HEK293 (cell line): ENCODE measurements at regions of chr19 and their contacts with region 1.

Region 1: DNA sequence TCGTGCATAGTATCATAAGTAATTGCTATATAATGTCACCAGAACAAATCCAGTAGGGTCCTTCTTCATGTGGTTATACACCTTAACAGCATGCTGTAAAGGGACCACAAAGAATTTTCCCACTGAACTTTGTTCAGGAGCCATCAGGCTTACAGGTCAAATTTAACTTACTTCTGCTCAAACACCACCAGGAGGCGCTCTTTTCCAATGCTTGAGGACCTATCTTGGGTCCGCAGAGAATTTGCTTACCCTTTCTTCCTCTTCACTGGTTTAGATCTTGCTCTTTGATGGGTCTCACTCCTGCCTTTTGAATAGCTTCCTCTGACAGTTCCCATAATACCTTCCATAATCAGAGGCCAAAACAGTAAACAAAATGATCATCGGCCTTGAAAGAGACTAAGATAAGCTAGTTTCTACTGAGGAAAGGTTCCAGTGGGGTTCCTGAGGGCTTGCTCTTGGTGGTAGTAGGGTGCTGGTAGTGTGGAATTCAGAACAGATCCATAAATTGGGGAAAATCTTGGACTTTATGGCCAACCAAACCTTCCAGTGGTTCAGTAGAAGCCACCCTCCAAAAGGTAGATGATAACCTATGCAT is 37.4 kb downstream of the SCGB2B2 start:
- H3K4me3 ChIP-seq: no peak overlapping the region
- H3K27ac ChIP-seq: no peak overlapping the region
- H3K4me1 ChIP-seq: no peaks in the 10 kb centered on the region
- CTCF ChIP-seq: peak; percentile 92

Region 2: GRCh38 chr19:34416021-34416545 is 223.5 kb before region 1 on chr19:
- CTCF ChIA-PET with region 1: no interaction called
- POLR2A ChIA-PET with region 1: no interaction called
- H3K4me3 ChIP-seq: no peak overlapping the region
- H3K27ac ChIP-seq: no peak overlapping the region
- H3K4me1 ChIP-seq: no peaks in the 10 kb centered on the region
- CTCF ChIP-seq: no peak

Region 3: GRCh38 chr19:34600366-34600765 is 39.2 kb before region 1 on chr19:
- CTCF ChIA-PET with region 1: interaction called, 10 read pairs
- POLR2A ChIA-PET with region 1: no interaction called
- H3K4me3 ChIP-seq: no peak overlapping the region
- H3K27ac ChIP-seq: no peak overlapping the region
- H3K4me1 ChIP-seq: no peaks in the 10 kb centered on the region
- CTCF ChIP-seq: no peak

Region 4: GRCh38 chr19:34654796-34655195 is 15.2 kb after region 1 on chr19:
- CTCF ChIA-PET with region 1: interaction called, 108 read pairs
- POLR2A ChIA-PET with region 1: no interaction called
- H3K4me3 ChIP-seq: no peak overlapping the region
- H3K27ac ChIP-seq: no peak overlapping the region
- H3K4me1 ChIP-seq: peaks cover 7% of the 10 kb centered on the region; the same call in 1 of the 2 replicates
- CTCF ChIP-seq: no peak

Region 5: DNA sequence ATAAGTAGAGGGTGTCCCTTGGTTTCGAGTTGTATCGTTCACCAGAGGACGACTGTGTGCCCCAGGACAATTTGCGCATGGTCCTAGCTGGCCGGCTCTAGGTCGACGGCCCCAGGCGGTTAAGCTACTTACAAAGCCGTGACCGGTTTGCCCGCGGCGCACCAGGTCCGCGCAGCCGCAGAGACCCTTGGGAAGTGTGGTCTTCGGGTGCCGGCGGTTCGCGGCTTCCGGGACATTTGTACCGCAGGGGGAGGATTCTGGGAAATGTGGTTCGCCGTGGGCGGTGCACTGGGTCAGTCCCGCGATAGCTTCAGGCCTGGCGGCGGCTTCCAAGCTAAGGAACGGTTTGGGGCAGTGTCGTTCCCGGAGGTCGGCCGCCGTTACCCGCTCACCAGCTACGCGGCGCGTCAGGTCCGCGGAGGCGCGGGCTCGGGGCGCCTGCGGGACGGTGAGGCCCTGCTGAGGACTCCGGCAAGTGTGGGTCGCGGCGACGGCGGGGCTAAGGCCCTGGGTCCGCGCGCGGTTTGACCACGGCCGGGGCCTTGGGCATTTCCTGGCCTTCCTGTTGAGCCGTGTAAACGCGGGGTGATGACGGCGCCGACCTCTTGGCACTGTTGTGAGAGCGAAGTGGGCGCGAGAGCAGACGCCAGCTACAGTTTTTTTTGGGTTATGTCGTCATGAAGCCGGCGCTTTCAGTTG is 37.9 kb after region 1 on chr19 and contains the start of gene ZNF302:
- CTCF ChIA-PET with region 1: interaction called, 34 read pairs
- POLR2A ChIA-PET with region 1: interaction called, 4 read pairs
- H3K4me3 ChIP-seq: peak within 1 kb of the TSS; percentile 68
- H3K27ac ChIP-seq: peak within 1 kb of the TSS; percentile 94
- H3K4me1 ChIP-seq: peaks cover 12% of the 10 kb centered on the region
- CTCF ChIP-seq: peak; percentile 65; the same call in 1 of the 2 replicates

Region 6: DNA sequence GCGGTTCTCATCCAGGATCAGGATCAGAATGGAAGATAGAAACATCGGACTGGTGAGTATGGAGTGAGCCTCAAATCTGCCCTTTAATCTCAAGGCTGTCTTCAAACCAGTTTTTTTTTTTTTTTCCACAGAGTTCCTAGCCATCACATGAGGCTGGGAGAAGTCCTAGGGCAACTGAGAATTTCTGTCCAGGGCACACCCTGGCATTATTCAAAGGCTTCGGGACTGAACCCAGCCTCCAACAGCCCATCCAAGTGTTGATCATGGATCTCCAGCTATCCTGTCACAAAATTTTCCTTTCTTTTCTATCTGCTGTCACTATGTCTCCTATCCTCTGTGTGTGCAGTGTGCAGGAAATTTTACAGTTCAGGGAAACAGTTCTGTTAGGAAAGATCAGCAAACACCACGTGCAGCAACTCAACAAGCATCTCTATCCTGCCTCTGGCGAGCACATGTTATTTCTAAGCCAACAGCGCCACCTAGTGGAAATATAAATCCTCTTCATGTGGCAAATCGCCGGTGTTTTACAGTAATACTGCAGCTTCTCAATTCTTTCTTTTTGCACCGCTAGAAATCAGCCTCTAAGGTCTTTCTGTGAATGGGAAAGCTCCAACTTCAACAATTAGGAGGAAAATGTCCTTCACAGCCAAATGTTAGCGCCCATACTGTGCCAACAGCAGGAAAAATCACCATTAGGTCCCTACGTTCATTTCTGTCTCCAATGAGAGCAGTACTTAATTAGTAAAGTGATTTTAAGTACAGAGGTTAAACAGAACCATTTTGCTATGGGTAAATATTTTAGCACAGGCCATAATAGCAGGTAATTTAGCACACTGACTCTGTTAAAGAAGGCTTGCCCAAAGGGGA is 73.0 kb after region 1 on chr19:
- CTCF ChIA-PET with region 1: interaction called, 163 read pairs
- POLR2A ChIA-PET with region 1: no interaction called
- H3K4me3 ChIP-seq: no peak overlapping the region
- H3K27ac ChIP-seq: no peak overlapping the region
- H3K4me1 ChIP-seq: no peaks in the 10 kb centered on the region
- CTCF ChIP-seq: peak; percentile 91